ENCODE measurements at regions of chr1 and their contacts with region 1.

Region 1: GRCh38 chr1:40662864-40663263 is 2.6 kb downstream of the RIMS3 start:
- DNase-seq: peak in 2 of 9 experiments; percentile 11 to 20
- ATAC-seq: no peak
- H3K4me3 ChIP-seq: no peak overlapping the region
- H3K4me3 Mint-ChIP-seq: no peak overlapping the region
- H3K27ac ChIP-seq: no peak overlapping the region
- H3K27ac Mint-ChIP-seq: peak overlapping the region; percentile 19
- H3K4me1 ChIP-seq: peaks cover 10% of the 10 kb centered on the region
- H3K4me1 Mint-ChIP-seq: peaks cover 14% of the 10 kb centered on the region
- H3K27me3 ChIP-seq: no peaks in the 10 kb centered on the region
- H3K27me3 Mint-ChIP-seq: no peaks in the 10 kb centered on the region
- CTCF ChIP-seq: no peak

Region 2: GRCh38 chr1:40625066-40625465 is 37.8 kb before region 1 on chr1:
- CTCF ChIA-PET with region 1: no interaction called
- POLR2A ChIA-PET with region 1: no interaction called
- intact Hi-C with region 1: loop called (anchors 2 to 5 kb)
- DNase-seq: peak in 4 of 9 experiments; percentile 27 to 49 (median 33)
- ATAC-seq: no peak
- H3K4me3 ChIP-seq: no peak overlapping the region
- H3K4me3 Mint-ChIP-seq: no peak overlapping the region
- H3K27ac ChIP-seq: no peak overlapping the region
- H3K27ac Mint-ChIP-seq: no peak overlapping the region
- H3K4me1 ChIP-seq: peaks cover 13% of the 10 kb centered on the region
- H3K4me1 Mint-ChIP-seq: peaks cover 22% of the 10 kb centered on the region
- H3K27me3 ChIP-seq: no peaks in the 10 kb centered on the region
- H3K27me3 Mint-ChIP-seq: no peaks in the 10 kb centered on the region
- CTCF ChIP-seq: no peak

Region 3: GRCh38 chr1:40709100-40709801 is 46.4 kb after region 1 on chr1:
- CTCF ChIA-PET with region 1: no interaction called
- POLR2A ChIA-PET with region 1: no interaction called
- intact Hi-C with region 1: no loop called
- DNase-seq: peak; percentile 43 to 94 (median 74)
- ATAC-seq: peak; percentile 95
- H3K4me3 ChIP-seq: peak overlapping the region; percentile 63
- H3K4me3 Mint-ChIP-seq: peak overlapping the region; percentile 99
- H3K27ac ChIP-seq: peak overlapping the region; percentile 67 to 94
- H3K27ac Mint-ChIP-seq: peak overlapping the region; percentile 98
- H3K4me1 ChIP-seq: peaks cover 48% of the 10 kb centered on the region
- H3K4me1 Mint-ChIP-seq: peaks cover 69% of the 10 kb centered on the region
- H3K27me3 ChIP-seq: no peaks in the 10 kb centered on the region
- H3K27me3 Mint-ChIP-seq: no peaks in the 10 kb centered on the region
- CTCF ChIP-seq: no peak